Endothelial cell of umbilical vein (primary cell): ENCODE measurements at regions of chr6 and their contacts with region 1.

Region 1: GRCh38 chr6:94323853-94324252 is 904.5 kb upstream of the EPHA7 start:
- DNase-seq: peak; percentile 1
- H3K4me3 ChIP-seq: no peak overlapping the region
- H3K27ac ChIP-seq: no peak overlapping the region
- H3K4me1 ChIP-seq: no peaks in the 10 kb centered on the region
- H3K27me3 ChIP-seq: no peaks in the 10 kb centered on the region
- CTCF ChIP-seq: peak in 1 of 2 donors; percentile 10
- POLR2A ChIP-seq: no peak

Region 2: DNA sequence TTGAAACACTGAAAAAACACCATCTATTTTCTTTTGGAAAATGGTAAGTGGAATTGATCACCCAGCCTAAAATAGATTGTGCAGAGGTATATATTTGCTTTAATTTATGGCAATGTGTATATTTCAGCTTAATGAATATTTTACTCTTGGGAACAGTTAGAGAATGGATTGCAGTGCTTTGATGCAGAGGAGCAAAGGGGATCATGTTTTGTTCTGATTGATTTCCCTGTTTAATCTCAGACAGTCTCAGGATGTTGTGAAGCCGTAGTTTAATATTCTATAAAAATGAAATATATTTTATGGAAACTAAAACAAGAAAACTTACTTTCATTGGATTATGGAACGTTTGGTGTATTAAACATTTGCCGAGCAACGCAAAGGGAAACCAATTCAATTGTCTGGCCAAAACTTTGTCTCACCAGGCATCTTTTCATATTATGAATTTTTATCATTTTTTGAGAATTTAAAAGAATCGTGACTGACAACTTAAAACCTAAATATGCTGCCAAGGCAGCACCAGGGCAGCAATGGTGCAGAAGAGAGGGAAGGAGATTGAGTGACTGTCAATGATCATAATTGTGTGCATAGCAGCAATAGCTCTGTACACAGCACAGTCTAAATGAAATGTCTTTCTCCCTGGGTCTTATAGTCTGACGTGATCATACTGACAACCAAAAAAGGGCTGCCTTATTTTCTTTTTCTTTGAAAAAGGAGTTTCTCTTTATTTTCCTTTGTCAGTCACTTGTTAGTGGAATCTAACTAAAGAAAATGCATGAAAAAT is 799.0 kb before region 1 on chr6:
- CTCF ChIA-PET with region 1: no interaction called
- POLR2A ChIA-PET with region 1: no interaction called
- dilution Hi-C with region 1: no loop called
- intact Hi-C with region 1: no loop called
- DNase-seq: no peak
- H3K4me3 ChIP-seq: no peak overlapping the region
- H3K27ac ChIP-seq: no peak overlapping the region
- H3K4me1 ChIP-seq: no peaks in the 10 kb centered on the region
- H3K27me3 ChIP-seq: no peaks in the 10 kb centered on the region
- CTCF ChIP-seq: no peak
- POLR2A ChIP-seq: no peak

Region 3: DNA sequence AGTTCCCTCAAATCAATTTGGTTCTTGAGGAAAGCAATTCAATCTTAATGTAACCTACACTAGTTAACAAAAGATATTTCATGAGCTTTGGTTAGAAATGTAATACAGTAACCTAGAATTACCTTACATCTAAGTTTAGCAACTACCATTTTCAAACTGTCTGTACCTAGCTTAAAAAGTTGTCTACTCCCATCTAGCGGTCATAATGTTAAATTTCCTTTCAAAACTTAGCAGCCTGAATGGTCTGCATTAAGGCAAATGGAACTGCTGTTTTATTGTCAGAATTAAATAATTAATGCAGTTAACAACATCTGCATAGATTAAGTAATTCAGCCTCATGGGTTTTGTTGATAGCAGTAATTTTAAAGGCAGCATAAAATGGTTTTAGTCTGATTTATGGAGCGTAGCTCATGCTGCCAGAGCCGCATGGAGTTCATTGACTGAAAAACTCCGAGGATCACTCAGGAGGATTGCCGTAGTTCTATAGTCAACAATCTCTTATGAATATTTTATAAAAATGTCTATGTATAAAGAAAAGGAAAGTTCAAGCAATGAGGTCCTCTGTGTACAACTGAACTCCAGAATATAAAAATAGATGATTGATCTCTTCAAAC is 768.1 kb after region 1 on chr6:
- CTCF ChIA-PET with region 1: interaction called, 3 read pairs
- POLR2A ChIA-PET with region 1: no interaction called
- dilution Hi-C with region 1: no loop called
- intact Hi-C with region 1: loop called (anchors 1 kb)
- DNase-seq: peak; percentile 39
- H3K4me3 ChIP-seq: no peak overlapping the region
- H3K27ac ChIP-seq: no peak overlapping the region
- H3K4me1 ChIP-seq: peaks cover 11% of the 10 kb centered on the region
- H3K27me3 ChIP-seq: no peaks in the 10 kb centered on the region
- CTCF ChIP-seq: peak; percentile 23 to 39
- POLR2A ChIP-seq: no peak